ENCODE measurements at regions of chr2 and their contacts with region 1.

Region 1: GRCh38 chr2:68889500-68890185 is 18.4 kb upstream of the BMP10 start:
- DNase-seq: no peak
- H3K4me3 ChIP-seq: no peak overlapping the region
- H3K27ac ChIP-seq: no peak overlapping the region
- H3K4me1 ChIP-seq: no peaks in the 10 kb centered on the region
- H3K27me3 ChIP-seq: no peaks in the 10 kb centered on the region
- CTCF ChIP-seq: no peak
- EP300 ChIP-seq: no peak
- POLR2A ChIP-seq: no peak

Region 2: GRCh38 chr2:68849579-68850030 is 40.0 kb before region 1 on chr2:
- in situ Hi-C with region 1: loop called in 1 of 4 experiments (anchors 10 kb)
- intact Hi-C with region 1: no loop called
- DNase-seq: no peak
- H3K4me3 ChIP-seq: no peak overlapping the region
- H3K27ac ChIP-seq: no peak overlapping the region
- H3K4me1 ChIP-seq: no peaks in the 10 kb centered on the region
- H3K27me3 ChIP-seq: no peaks in the 10 kb centered on the region
- CTCF ChIP-seq: no peak
- EP300 ChIP-seq: no peak
- POLR2A ChIP-seq: no peak

Region 3: DNA sequence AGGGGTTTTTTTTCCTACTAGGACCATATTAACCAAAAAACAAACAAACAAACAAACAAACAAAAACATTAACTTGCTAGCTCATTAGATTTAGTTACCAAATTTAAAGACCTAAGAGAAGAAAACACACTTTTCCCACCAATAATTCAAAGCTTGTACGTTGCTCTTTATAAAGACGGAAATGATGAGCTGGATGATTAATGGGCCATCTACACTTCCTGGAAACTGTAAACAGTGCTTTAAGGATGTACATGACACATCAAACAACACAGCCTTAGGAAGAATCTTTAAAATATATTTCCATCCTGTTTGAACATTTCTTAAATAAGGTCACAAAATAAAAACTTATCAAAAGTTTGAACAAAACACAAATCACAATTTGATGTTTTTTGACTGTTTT is 19.4 kb before region 1 on chr2:
- in situ Hi-C with region 1: no loop called
- intact Hi-C with region 1: no loop called
- DNase-seq: no peak
- H3K4me3 ChIP-seq: no peak overlapping the region
- H3K27ac ChIP-seq: no peak overlapping the region
- H3K4me1 ChIP-seq: no peaks in the 10 kb centered on the region
- H3K27me3 ChIP-seq: no peaks in the 10 kb centered on the region
- CTCF ChIP-seq: no peak
- EP300 ChIP-seq: no peak
- POLR2A ChIP-seq: no peak